ENCODE measurements at regions of chr1 and their contacts with region 1.

Region 1: DNA sequence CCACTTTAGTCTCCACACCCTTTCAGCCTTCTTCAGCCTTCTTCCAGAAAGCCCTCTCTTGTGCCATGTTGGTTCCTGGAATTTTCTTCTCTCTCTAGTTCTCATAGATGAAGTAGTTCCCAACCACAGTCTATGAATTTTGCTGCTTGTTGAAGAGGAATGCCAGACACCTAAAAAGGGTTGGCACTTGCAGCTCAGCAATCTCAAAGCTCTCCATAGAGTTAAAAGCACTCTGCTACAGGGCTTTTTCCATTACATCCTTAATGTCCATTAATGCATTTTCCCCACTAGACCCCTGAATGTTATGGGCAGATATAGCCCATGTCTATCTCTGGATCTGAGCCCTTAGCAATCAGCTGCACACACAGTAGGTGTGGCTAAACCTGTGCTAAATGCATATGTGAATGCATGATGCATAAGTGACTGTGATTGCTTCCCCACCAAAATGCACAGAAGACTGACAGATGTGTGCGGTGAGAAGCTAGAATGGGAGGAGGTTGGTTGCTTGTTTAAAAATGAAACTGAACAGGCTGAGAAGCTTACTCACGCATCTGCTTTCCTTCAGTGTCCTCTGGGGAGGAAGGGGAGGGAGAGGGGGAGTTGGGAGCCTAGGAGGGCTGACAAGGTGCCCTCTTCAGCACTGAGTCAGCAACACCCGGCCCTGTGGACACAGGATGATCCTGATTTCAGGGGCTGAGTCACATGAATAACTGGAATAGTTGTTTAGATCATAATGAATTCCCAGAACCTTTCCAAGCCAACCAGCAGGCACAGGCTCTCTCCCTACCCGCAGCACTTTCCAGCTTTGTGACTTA is 146.1 kb upstream of the FGGY start:
- DNase-seq: peak; percentile 86
- ATAC-seq: peak; percentile 93

Region 2: GRCh38 chr1:58896246-58897183 is 254.3 kb before region 1 on chr1:
- intact Hi-C with region 1: loop called (anchors 10 kb)
- DNase-seq: peak; percentile 84
- ATAC-seq: peak; percentile 78

Region 3: DNA sequence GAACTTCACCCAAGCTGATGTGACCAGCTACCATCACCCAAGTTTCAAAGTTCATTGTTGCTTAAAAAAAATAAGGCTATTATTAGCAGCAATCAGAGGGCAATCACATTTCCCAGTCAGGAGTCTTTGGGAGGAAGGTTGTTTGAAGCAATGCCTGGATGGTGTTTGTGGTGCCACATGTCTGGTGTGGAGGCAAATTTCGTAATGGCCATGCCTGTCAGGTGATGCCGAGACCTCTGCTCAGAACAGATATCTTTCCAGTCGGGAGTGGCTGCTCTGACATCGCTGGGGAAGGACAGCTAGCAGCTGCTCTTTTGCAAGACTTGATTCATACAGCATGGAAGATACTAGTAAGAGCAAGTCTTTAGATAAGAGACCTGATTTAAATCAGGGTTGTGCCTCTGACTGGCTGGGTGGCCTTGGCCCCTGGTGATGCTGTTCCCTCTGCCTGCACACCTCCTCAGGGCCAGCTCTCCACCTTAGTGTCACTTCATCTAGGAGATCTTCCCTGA is 179.1 kb before region 1 on chr1:
- intact Hi-C with region 1: loop called (anchors 10 kb)
- DNase-seq: no peak
- ATAC-seq: peak; percentile 75

Region 4: DNA sequence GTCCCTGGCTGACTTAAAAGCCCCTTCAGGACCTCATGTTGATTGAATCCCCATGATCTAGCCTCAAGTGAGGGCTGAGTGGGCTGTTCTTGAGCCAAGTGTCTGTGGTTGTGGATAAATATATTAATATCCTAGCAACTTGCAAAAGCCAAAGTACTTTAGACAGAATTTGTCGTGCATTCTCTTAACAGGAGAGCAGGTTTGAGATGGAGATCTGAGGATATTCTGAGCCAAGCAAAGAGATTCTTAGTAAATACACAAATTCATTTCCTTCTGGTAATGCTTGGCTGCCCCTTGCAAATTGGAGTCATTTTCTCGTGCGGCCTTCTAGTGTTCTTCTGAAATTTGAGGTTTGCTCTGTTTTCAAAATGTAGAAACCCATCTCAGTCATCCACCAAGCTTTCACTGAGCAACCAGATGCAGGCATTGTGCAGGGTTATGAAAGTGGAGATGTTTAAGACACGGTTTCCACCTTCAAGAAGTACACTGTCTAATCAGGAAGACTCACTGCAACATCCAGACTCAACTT is 124.8 kb before region 1 on chr1:
- intact Hi-C with region 1: no loop called
- DNase-seq: no peak
- ATAC-seq: no peak

Region 5: DNA sequence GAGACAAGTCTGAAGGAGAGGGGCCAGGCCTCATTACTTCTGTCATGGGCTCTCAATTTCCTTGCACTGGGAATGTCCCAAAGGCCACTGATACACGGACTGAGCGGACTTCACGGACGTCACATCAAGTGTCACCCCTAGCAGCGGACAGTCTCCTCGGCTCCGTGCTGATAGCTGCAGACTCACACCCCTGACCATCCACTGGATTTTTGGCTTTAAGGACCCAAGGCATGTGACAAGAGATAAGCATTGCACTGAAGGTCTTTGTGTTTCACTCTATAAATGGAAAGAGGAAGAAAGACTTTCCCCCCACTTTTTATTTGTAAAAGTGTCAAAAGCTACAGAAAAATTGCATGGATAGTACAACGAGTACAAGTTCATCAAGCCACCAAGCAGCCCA is 54.3 kb before region 1 on chr1:
- intact Hi-C with region 1: no loop called
- DNase-seq: peak; percentile 60
- ATAC-seq: peak; percentile 92

Region 6: DNA sequence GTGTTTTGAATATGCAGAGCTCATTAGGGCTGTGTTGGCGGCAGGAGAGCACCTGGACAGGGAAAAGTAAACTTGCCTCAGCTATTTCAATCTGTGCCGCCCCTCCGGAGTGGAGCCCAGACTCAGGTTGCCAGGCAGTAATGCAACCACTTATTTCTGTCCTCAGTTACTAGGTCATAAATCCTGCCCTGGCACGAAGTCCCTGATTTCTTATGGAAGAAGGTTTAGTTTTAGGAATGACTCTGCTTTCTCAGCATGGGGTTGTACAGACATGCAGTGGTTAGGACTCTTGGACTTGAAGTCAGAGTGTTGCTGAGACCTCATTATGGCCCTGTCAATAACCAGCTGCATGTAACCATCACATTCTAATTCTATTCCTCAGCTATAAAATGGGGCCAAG is 47.8 kb after region 1 on chr1:
- intact Hi-C with region 1: no loop called
- DNase-seq: no peak
- ATAC-seq: peak; percentile 11

Region 7: DNA sequence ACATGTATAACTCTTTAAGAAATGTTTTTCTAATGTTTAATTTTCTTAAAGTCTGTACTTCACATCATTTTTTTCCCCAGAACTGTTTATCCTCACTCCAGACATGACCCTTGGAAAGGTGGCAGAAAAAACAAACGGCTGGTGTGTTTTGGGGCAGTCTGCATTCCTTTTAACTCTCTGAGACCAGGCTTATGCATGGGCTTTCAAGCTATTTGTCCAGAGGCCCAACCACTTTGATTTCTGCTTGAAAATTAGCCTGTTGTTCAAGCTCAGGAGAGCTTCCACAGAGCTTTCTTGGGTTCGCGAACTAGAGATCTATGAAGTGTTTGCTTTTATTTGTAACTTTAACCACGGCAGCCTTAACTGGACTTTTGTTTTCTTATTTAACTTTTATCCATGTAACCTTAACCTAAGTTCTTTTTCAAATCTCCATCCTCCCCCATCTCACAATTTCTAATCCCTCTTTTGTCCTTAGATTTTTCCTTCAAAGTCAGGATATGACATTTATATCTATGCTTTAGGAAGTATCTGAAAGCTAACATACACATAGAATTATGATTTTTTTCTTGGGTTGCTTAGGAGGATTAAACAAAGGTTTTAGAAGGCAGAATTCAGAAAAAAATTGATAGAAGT is 257.9 kb after region 1 on chr1:
- intact Hi-C with region 1: no loop called
- DNase-seq: no peak
- ATAC-seq: no peak